ENCODE measurements at regions of chr11 and their contacts with region 1.

Region 1: GRCh38 chr11:121591405-121592033 is 138.8 kb upstream of the SORL1-AS1 start:
- DNase-seq: peak; percentile 70 to 72
- H3K4me3 ChIP-seq: no peak overlapping the region
- H3K27ac ChIP-seq: no peak overlapping the region
- H3K4me1 ChIP-seq: peaks cover 0 to 15% (median 11%) of the 10 kb centered on the region in 4 donors
- H3K27me3 ChIP-seq: no peaks in the 10 kb centered on the region
- CTCF ChIP-seq: peak; percentile 79 to 83

Region 2: DNA sequence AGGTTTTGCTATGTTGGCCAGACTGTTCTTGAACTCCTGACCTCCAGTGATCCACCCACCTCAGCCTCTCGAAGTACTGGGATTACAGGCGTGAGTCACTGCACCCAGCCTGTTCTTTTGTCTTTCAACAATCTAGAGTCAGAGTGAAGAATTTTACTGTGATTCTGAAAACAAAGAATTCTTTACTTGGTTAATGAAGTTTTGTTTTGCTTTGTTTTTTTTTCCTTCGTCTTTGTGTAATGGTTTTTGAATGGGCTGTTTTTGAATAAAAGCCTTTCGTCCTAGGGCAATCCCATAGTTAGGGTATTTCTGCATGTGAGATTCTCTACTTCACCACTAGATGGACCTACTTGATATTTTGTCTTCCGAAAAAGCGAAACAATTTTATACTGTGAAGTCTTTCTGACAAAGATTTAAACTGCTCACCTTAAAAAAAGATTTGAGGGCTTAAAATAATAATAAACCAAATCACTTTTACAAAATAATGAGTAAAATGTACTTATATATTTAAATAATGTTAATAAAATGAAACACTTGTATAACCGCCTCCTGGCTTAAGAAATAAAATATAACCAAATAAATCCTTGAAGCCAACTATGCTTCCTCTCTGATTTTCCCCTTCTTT is 342.4 kb before region 1 on chr11:
- intact Hi-C with region 1: loop called (anchors 10 kb)
- DNase-seq: no peak
- H3K4me3 ChIP-seq: no peak overlapping the region
- H3K27ac ChIP-seq: no peak overlapping the region
- H3K4me1 ChIP-seq: no peaks in the 10 kb centered on the region
- H3K27me3 ChIP-seq: no peaks in the 10 kb centered on the region
- CTCF ChIP-seq: peak; percentile 68 to 70

Region 3: DNA sequence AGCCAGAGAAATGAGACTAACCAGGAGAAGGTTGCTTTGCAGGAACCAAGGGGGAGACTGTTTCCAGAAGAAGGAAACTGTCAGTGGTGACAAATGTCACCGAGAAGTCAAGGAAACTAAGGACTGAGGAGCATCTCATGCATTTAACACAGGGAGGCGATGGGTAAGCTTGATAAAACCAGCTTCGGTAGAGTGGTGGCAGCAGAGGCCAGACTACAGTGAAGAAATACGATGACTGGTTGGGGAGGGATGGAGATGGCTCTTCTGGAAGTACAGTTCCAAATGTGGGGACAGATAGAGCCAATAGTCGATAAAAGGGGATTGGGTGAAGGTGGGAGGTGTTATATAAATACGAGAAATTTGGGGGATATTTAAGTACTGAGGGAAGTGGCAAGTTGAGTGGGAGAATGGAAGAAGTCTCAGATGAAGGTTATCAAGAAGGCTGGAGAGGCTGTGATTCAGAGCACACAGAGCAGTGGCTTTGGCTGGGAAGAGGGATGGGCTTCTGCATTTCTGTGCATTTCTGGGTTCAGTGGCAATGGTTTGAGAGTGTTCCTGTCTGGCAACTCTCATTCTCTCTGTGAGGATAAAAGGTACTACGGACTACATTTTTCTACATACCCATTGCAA is 269.8 kb before region 1 on chr11:
- intact Hi-C with region 1: loop called (anchors 5 kb)
- DNase-seq: peak in 1 of 2 donors; percentile 29
- H3K4me3 ChIP-seq: no peak overlapping the region
- H3K27ac ChIP-seq: no peak overlapping the region
- H3K4me1 ChIP-seq: no peaks in the 10 kb centered on the region
- H3K27me3 ChIP-seq: no peaks in the 10 kb centered on the region
- CTCF ChIP-seq: peak; percentile 46 to 49

Measured in tibial artery (tissue), 4 donors.